ENCODE measurements at regions of chr4 and their contacts with region 1.

Region 1: GRCh38 chr4:25862411-25863346 is at the start of gene SEL1L3:
- DNase-seq: peak; percentile 37
- H3K4me3 Mint-ChIP-seq: peak within 1 kb of the TSS; percentile 100
- H3K27ac Mint-ChIP-seq: peak within 1 kb of the TSS; percentile 100
- H3K4me1 Mint-ChIP-seq: peaks cover 37% of the 10 kb centered on the region
- H3K27me3 Mint-ChIP-seq: no peaks in the 10 kb centered on the region
- total RNA-seq, gene SEL1L3: 44.0 and 49.2 TPM in 2 replicates

Region 2: DNA sequence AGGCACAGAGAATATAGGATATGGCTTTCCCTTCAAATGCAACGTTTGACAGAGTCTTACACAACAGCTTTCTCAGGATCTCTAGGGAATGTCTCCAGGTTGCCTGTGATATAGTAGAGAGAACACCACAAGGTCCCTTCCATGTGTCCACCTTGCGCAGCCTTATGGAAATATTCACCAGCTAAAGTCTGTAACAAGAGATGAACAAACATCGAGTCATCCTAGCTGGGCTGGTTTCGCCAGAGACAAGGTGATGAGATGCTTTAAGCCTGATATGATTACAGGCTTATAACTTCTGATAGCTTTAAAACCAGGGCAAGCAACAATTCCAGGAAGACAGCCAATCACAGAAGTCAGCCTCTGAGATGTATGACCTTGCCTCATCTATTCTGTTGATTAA is 83.7 kb before region 1 on chr4:
- intact Hi-C with region 1: loop called (anchors 5 kb)
- DNase-seq: no peak
- H3K4me3 Mint-ChIP-seq: no peak overlapping the region
- H3K27ac Mint-ChIP-seq: no peak overlapping the region
- H3K4me1 Mint-ChIP-seq: peaks cover 8% of the 10 kb centered on the region
- H3K27me3 Mint-ChIP-seq: no peaks in the 10 kb centered on the region

Region 3: GRCh38 chr4:25813448-25814106 is 49.1 kb before region 1 on chr4:
- intact Hi-C with region 1: no loop called
- DNase-seq: no peak
- H3K4me3 Mint-ChIP-seq: no peak overlapping the region
- H3K27ac Mint-ChIP-seq: no peak overlapping the region
- H3K4me1 Mint-ChIP-seq: no peaks in the 10 kb centered on the region
- H3K27me3 Mint-ChIP-seq: no peaks in the 10 kb centered on the region

Region 4: DNA sequence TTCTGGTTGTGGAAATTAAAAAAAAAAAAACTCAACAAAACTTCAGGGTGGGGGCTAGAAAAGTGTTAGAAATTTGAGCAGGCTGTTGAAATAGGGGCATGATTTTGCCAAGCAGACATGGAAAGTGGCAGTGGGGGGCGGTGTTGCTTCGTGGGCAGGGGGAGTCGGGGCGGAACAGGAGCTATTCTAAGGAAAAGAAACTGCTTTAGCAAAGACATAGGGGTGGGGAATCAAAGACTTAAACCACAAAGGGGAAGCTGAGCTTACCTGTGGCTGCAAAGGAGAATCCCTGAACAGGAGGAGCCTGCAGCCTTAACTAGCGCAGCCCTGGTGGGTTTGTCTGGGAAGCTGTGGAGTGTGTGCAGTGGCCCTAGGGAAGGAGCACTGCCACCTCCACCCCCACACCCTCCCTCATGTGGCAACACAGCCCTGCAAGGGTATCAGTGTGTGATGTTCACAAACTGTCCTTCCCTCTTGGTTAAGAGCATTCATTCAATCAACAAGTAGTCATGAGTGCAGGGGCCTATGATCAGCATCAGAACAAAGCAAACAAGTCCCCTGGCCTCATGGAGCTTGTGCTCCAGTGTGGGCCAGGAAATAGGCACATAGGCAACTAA is 20.3 kb before region 1 on chr4:
- intact Hi-C with region 1: loop called (anchors 2 kb)
- DNase-seq: peak; percentile 22
- H3K4me3 Mint-ChIP-seq: no peak overlapping the region
- H3K27ac Mint-ChIP-seq: peak overlapping the region; percentile 70
- H3K4me1 Mint-ChIP-seq: peaks cover 37% of the 10 kb centered on the region
- H3K27me3 Mint-ChIP-seq: no peaks in the 10 kb centered on the region

Region 5: DNA sequence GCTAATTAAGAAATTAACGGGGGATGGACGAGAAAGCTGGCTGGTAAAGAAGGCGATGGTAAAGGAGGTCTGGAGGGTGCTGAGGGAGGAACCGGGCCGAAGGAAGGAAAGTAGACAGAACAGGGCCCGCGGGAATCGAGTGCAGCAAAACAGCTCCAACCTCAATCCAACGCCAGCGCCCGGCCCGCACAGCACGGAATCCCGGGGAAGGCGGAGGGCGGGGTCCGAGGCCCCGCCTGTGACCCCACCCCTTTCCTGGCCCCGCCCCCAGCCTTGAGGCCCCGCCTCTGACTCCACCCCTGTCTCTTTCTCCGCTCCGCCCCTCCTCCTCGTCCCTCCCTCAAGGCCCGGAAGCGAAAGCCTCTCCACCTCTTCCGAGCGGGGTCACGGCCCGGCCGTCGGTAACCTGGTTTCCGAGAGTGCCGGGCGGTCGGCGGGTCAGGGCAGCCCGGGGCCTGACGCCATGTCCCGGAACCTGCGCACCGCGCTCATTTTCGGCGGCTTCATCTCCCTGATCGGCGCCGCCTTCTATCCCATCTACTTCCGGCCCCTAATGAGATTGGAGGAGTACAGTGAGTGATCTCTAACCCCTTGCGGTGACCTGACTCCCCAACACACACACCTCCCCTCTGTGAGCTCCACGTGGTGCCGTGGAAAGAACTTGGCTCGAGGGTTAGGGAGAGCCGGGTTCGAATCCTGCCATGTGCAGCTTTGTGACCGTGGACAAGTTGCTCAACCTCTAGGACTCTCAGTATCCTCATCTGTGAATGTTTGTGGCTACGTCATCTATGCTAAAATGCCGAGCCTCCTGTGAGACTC is 51.4 kb after region 1 on chr4 and contains the start of gene SMIM20:
- intact Hi-C with region 1: loop called (anchors 2 kb)
- DNase-seq: peak; percentile 90
- H3K4me3 Mint-ChIP-seq: peak within 1 kb of the TSS; percentile 92
- H3K27ac Mint-ChIP-seq: peak within 1 kb of the TSS; percentile 98
- H3K4me1 Mint-ChIP-seq: peaks cover 21% of the 10 kb centered on the region
- H3K27me3 Mint-ChIP-seq: peaks cover 12% of the 10 kb centered on the region
- total RNA-seq, gene SMIM20: 17.0 and 18.7 TPM in 2 replicates

Region 6: DNA sequence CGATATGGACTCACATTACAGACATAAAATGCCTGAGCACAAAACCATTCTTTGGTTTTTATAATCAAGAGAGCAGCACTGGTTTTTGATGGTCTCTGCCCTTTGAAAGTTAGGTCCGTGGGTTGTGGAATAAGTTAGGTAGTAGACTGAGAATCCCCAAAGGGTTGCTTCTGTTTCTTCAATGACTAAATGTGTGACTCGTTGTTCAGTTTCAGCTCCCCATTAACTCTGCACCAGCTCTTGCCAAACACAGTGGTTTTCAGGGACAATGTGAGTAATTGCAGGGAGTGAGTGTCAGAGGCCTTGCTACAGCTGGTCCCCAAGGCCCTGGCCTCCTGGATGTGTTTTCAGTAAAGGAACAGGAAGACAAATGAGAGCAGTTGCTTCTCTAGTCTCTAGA is 76.1 kb after region 1 on chr4:
- intact Hi-C with region 1: loop called (anchors 2 kb)
- DNase-seq: peak; percentile 21
- H3K4me3 Mint-ChIP-seq: peak overlapping the region; percentile 59
- H3K27ac Mint-ChIP-seq: peak overlapping the region; percentile 96
- H3K4me1 Mint-ChIP-seq: peaks cover 34% of the 10 kb centered on the region
- H3K27me3 Mint-ChIP-seq: no peaks in the 10 kb centered on the region

Region 7: DNA sequence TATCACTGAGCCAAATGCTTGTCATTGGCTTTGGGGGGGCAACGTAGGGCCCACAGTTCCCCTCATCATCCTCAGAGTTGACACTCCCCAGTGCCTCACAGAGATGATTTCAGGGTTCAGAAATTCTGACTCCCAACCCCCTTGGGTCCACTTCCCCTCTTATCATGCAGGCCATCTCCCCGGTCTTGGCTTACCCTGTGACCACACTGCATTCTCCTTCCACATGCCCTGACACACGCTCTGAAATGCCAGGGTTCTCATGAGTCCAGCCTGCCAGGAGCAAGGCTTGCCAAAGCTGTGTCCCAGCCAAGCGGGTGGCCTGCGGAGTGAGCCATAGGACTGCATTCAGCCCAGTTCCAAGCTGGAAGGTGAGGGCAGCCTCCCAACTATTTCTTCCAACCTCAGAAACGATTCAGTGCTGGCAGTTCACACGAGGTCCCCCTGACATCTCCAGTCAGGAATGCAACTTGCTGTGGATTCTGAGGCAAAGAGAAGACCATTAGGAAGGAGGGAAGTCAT is 152.5 kb after region 1 on chr4:
- intact Hi-C with region 1: loop called (anchors 10 kb)
- DNase-seq: no peak
- H3K4me3 Mint-ChIP-seq: no peak overlapping the region
- H3K27ac Mint-ChIP-seq: no peak overlapping the region
- H3K4me1 Mint-ChIP-seq: peaks cover 55% of the 10 kb centered on the region
- H3K27me3 Mint-ChIP-seq: peaks cover 3% of the 10 kb centered on the region